A549 (cell line): ENCODE measurements at regions of chr12 and their contacts with region 1.

Region 1: DNA sequence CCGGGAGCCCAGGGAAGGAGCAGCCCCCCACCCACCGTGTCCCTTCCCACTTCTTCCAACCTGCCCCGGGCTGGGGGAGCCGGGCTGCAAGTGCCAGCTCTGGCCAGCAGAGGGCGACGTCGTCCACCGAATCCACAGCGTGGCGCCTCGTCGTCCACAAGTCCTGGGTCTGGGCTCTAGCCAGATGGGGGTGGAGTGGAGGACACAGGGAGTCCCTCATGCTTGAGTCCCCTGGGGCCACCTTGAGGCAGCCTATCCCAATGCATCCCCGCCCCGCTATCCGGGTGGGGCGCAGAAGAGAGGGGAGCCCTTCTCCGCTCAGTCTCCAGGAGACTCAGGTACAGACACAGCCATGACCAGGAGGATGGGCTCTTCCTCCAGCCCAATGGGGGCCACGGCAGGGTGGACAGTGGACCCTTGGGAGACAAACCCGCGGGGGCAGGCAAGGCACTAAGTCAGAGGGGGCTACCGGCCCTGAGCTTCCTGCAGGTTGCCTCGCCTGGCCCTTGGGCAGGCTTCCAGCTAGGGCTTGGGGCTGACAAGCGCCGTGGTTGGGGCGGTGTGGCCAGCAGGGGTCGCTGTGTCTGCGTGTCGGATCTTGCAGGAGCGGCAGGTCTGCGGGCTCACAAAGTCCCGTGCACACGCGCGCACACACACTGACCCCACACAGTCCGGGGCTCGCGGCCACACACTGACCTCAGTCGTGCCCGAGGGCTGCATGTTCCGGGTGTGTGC is 5.5 kb downstream of the AQP5 start:
- DNase-seq: peak; percentile 91 to 93
- ATAC-seq: peak; percentile 76 to 87
- H3K4me3 ChIP-seq: peak overlapping the region; percentile 49
- H3K27ac ChIP-seq: peak overlapping the region; percentile 77 to 85
- H3K4me1 ChIP-seq: peaks cover 16% of the 10 kb centered on the region
- CTCF ChIP-seq: peak; percentile 79
- EP300 ChIP-seq: no peak
- POLR2A ChIP-seq: no peak
- RAD21 ChIP-seq: peak; percentile 81 to 86

Region 2: DNA sequence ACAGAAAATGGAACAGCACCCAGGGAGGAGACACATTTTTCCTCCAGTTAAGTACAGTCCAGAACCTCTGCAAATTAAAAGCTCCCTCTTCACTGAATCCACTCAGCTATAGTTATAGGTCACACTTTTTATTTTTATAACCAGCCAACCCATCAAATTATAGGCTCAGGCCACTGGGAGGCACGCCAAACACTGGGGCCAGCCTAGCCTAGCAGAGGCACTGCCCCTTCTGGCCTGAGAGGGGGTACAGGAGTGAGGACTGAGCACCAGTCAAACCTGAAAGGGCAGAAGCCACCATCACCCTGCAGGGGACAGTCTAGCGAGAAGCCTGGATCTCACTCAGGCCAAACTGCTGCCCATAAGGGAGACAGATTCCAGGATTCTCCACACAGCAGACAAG is 279.3 kb before region 1 on chr12:
- CTCF ChIA-PET with region 1: no interaction called
- POLR2A ChIA-PET with region 1: no interaction called
- DNase-seq: no peak
- ATAC-seq: peak; percentile 83 to 84
- H3K4me3 ChIP-seq: no peak overlapping the region
- H3K27ac ChIP-seq: no peak overlapping the region
- H3K4me1 ChIP-seq: no peaks in the 10 kb centered on the region
- CTCF ChIP-seq: no peak
- EP300 ChIP-seq: no peak
- POLR2A ChIP-seq: no peak
- RAD21 ChIP-seq: no peak

Region 3: DNA sequence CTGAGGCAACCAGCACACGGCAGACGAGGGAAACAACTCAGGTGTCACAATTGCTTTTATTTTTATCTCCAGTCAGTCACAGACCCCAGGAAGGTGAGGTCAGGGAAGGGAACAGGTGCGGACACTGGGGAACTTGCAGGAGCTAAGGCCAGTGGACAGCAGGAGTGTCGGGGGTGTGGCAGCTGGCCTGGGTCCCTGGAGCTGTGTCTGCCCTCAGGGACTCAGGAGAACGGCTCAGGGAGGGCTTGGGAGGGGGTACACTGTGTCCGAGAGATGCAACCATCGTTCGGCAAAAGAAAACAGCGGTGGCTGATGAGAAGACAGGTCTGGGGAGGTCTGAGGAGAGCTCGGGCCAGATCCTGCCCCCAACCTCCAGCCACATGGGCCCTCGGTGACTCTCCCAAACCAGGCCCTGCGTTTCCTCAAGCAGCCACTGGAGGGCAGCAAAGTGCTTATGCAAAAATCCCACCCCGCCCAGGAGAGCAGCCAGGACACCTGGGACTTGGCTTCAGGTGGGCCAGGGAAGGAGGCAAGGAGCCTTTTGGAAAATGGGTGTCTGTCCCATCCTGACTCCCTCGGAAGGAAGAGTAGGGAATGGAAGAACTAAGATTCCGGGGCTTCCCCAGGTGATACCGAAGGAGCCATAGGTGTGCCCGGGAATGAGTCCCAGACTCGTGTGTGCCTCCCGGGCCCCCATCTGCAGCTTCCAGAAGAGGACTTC is 100.2 kb before region 1 on chr12:
- CTCF ChIA-PET with region 1: interaction called, 104 read pairs
- POLR2A ChIA-PET with region 1: no interaction called
- DNase-seq: peak; percentile 66 to 95
- ATAC-seq: peak; percentile 55 to 92
- H3K4me3 ChIP-seq: no peak overlapping the region
- H3K27ac ChIP-seq: peak overlapping the region in 1 of 2 experiments; percentile 22; a peak in 1 of 6 replicates
- H3K4me1 ChIP-seq: no peaks in the 10 kb centered on the region; the same call in 2 of the 3 replicates
- CTCF ChIP-seq: peak; percentile 88
- EP300 ChIP-seq: no peak
- POLR2A ChIP-seq: no peak
- RAD21 ChIP-seq: peak; percentile 84 to 91

Region 4: GRCh38 chr12:49945394-49946080 is 21.7 kb before region 1 on chr12:
- CTCF ChIA-PET with region 1: interaction called, 193 read pairs
- POLR2A ChIA-PET with region 1: interaction called, 3 read pairs
- DNase-seq: peak; percentile 82 to 93
- ATAC-seq: peak; percentile 97 to 99
- H3K4me3 ChIP-seq: no peak overlapping the region
- H3K27ac ChIP-seq: peak overlapping the region; percentile 6 to 59; a peak in 3 of 6 replicates
- H3K4me1 ChIP-seq: 0 out of 3 replicates have a peak, but pooled peaks cover 7% of the 10 kb centered on the region
- CTCF ChIP-seq: peak; percentile 91
- EP300 ChIP-seq: no peak
- POLR2A ChIP-seq: no peak
- RAD21 ChIP-seq: peak; percentile 54 to 55; a peak in 4 of 5 replicates

Region 5: GRCh38 chr12:50016501-50017475 is 49.6 kb after region 1 on chr12:
- CTCF ChIA-PET with region 1: interaction called, 31 read pairs
- POLR2A ChIA-PET with region 1: no interaction called
- DNase-seq: no peak
- ATAC-seq: no peak
- H3K4me3 ChIP-seq: no peak overlapping the region
- H3K27ac ChIP-seq: no peak overlapping the region
- H3K4me1 ChIP-seq: peaks cover 7% of the 10 kb centered on the region; the same call in 2 of the 3 replicates
- CTCF ChIP-seq: no peak
- EP300 ChIP-seq: no peak
- POLR2A ChIP-seq: no peak
- RAD21 ChIP-seq: no peak

Region 6: DNA sequence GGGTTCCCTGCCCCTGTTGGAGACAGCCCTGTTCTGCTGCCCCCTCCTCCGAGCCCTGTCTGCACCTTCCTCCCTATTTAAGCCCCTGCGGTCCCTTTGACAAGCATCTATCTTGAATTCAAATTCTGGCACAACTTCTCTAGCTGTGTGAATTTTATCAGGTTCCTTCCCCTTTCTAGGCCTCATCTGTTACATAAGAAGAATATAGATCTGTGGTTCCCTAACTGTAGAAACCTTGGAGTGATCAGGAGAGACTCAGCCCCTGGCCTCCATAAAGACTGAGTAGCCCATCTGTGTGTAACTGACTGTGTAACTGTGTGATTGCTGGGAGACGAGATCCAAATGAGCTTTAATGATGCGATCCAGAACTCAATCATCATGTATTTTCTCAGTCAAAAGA is 71.1 kb after region 1 on chr12:
- CTCF ChIA-PET with region 1: interaction called, 75 read pairs
- POLR2A ChIA-PET with region 1: no interaction called
- DNase-seq: no peak
- ATAC-seq: no peak
- H3K4me3 ChIP-seq: no peak overlapping the region
- H3K27ac ChIP-seq: no peak overlapping the region
- H3K4me1 ChIP-seq: no peaks in the 10 kb centered on the region
- CTCF ChIP-seq: no peak
- EP300 ChIP-seq: no peak
- POLR2A ChIP-seq: no peak
- RAD21 ChIP-seq: no peak

Region 7: GRCh38 chr12:50055831-50056638 is 88.8 kb after region 1 on chr12:
- CTCF ChIA-PET with region 1: interaction called, 708 read pairs
- POLR2A ChIA-PET with region 1: interaction called, 3 read pairs
- DNase-seq: peak; percentile 59 to 85
- ATAC-seq: peak; percentile 51 to 77; a peak in 5 of 6 replicates
- H3K4me3 ChIP-seq: peak overlapping the region; percentile 85; the same call in 2 of the 3 replicates
- H3K27ac ChIP-seq: peak overlapping the region; percentile 38 to 55; a peak in 3 of 6 replicates
- H3K4me1 ChIP-seq: peaks cover 18% of the 10 kb centered on the region
- CTCF ChIP-seq: peak; percentile 96
- EP300 ChIP-seq: no peak
- POLR2A ChIP-seq: no peak
- RAD21 ChIP-seq: peak; percentile 80 to 87

Region 8: GRCh38 chr12:50174971-50175715 is 207.9 kb after region 1 on chr12:
- CTCF ChIA-PET with region 1: interaction called, 16 read pairs
- POLR2A ChIA-PET with region 1: no interaction called
- DNase-seq: peak; percentile 52 to 81
- ATAC-seq: peak in 1 of 2 experiments; percentile 72; a peak in 3 of 6 replicates
- H3K4me3 ChIP-seq: no peak overlapping the region
- H3K27ac ChIP-seq: no peak overlapping the region
- H3K4me1 ChIP-seq: 0 out of 3 replicates have a peak, but pooled peaks cover 4% of the 10 kb centered on the region
- CTCF ChIP-seq: peak; percentile 91
- EP300 ChIP-seq: no peak
- POLR2A ChIP-seq: no peak
- RAD21 ChIP-seq: peak; percentile 91 to 92